CD4-positive, alpha-beta memory T cell (primary cell): ENCODE measurements at regions of chr3 and their contacts with region 1.

Region 1: GRCh38 chr3:185929192-185930151 is 8.3 kb downstream of the TRA2B start:
- DNase-seq: no peak
- H3K4me3 ChIP-seq: peak overlapping the region in 1 of 2 donors; percentile 37
- H3K4me3 Mint-ChIP-seq: peak overlapping the region; percentile 42 to 100 (median 83)
- H3K27ac ChIP-seq: peak overlapping the region; percentile 45
- H3K27ac Mint-ChIP-seq: peak overlapping the region; percentile 2 to 100 (median 73)
- H3K4me1 ChIP-seq: peaks cover 99% of the 10 kb centered on the region
- H3K4me1 Mint-ChIP-seq: peaks cover 76 to 100% (median 91%) of the 10 kb centered on the region in 4 donors
- H3K27me3 ChIP-seq: no peaks in the 10 kb centered on the region
- H3K27me3 Mint-ChIP-seq: no peaks in the 10 kb centered on the region

Region 2: DNA sequence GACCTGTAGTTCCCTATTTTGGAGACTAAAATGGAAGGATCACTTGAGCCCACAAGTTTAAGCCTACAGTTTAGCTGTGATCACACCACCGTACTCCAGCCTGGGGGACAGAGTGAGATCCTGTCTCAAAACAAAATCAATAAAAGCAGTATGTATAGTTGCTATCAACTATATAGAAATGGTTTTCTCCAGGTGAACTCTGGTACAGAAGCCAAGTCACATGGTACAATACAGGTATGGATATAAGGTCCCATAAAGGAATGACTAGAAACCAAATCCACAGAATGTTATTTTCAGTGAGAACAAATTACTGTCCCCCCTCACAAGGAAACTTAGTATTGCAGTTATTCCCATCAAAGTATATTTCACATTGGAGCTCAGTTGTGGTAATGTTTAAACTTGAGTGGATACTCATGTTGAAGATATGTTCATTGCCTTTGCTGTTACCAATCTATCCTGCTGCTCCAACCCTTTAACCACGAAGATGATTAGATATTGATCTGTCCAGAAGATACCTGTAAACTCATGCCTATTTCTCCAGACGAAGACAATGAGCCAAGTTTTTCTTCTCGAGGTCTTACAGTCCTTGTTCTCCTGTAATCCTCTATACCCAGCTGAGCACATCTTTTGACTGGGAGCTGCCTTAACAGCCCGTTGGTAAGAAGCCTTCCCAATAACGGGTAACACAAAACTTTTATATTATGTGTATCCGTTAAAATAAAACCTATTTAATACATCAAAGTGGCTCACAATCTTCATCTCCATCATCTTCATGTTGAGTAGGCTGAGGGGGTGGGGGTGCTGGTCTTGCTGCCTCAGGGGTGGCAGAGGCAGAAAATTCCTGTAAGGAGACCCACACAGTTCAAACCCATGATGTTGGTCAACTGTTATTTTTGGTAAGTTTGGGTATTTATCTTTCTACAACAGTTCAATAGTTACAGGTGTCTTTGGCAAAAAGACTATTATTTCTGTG is 16.3 kb before region 1 on chr3:
- CTCF ChIA-PET with region 1: interaction called, 7 read pairs
- POLR2A ChIA-PET with region 1: interaction called, 44 read pairs
- intact Hi-C with region 1: loop called (anchors 2 kb)
- DNase-seq: no peak
- H3K4me3 ChIP-seq: no peak overlapping the region
- H3K4me3 Mint-ChIP-seq: no peak overlapping the region
- H3K27ac ChIP-seq: no peak overlapping the region
- H3K27ac Mint-ChIP-seq: peak overlapping the region in 4 of 7 donors; percentile 17 to 82 (median 41)
- H3K4me1 ChIP-seq: no peaks in the 10 kb centered on the region
- H3K4me1 Mint-ChIP-seq: peaks cover 4 to 9% (median 7%) of the 10 kb centered on the region in 4 donors
- H3K27me3 ChIP-seq: no peaks in the 10 kb centered on the region
- H3K27me3 Mint-ChIP-seq: no peaks in the 10 kb centered on the region